Activated CD4-positive, alpha-beta memory T cell treated with anti-CD3 and anti-CD28 coated beads, Interleukin-2, amount 10 ng/mL, durations not matched to agents 7 days and 5 days (primary cell): ENCODE measurements at regions of chr1 and their contacts with region 1.

Region 1: GRCh38 chr1:112369392-112370285 is 26.4 kb upstream of the CTTNBP2NL start:
- DNase-seq: peak; percentile 85
- H3K4me3 Mint-ChIP-seq: no peak overlapping the region
- H3K27ac Mint-ChIP-seq: no peak overlapping the region
- H3K4me1 Mint-ChIP-seq: no peaks in the 10 kb centered on the region
- H3K27me3 Mint-ChIP-seq: peaks cover 54% of the 10 kb centered on the region

Region 2: DNA sequence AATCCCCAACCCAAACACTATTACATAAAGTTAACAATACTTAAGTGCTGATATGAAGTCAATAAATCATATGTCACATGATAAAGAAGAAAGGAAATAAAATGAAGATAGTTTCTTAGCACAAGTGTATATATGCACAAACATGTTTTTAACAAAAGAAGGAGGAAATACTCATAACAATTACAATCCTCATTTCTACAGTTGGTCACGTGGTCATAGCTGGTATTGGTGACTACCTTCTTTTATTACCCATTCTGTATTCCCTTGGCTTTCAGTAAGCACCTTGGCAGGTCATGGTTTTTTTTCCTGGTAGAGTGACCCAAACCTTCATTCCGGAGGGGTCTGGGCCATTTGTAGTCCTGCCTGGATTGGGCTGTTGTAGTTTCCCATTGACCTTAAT is 243.0 kb before region 1 on chr1:
- CTCF ChIA-PET with region 1: no interaction called
- POLR2A ChIA-PET with region 1: no interaction called
- DNase-seq: no peak
- H3K4me3 Mint-ChIP-seq: no peak overlapping the region
- H3K27ac Mint-ChIP-seq: no peak overlapping the region
- H3K4me1 Mint-ChIP-seq: no peaks in the 10 kb centered on the region
- H3K27me3 Mint-ChIP-seq: peaks cover 2% of the 10 kb centered on the region

Region 3: GRCh38 chr1:112298558-112298957 is 71.1 kb before region 1 on chr1:
- CTCF ChIA-PET with region 1: interaction called, 19 read pairs
- POLR2A ChIA-PET with region 1: no interaction called
- DNase-seq: peak; percentile 53
- H3K4me3 Mint-ChIP-seq: no peak overlapping the region
- H3K27ac Mint-ChIP-seq: no peak overlapping the region
- H3K4me1 Mint-ChIP-seq: no peaks in the 10 kb centered on the region
- H3K27me3 Mint-ChIP-seq: peaks cover 15% of the 10 kb centered on the region

Region 4: DNA sequence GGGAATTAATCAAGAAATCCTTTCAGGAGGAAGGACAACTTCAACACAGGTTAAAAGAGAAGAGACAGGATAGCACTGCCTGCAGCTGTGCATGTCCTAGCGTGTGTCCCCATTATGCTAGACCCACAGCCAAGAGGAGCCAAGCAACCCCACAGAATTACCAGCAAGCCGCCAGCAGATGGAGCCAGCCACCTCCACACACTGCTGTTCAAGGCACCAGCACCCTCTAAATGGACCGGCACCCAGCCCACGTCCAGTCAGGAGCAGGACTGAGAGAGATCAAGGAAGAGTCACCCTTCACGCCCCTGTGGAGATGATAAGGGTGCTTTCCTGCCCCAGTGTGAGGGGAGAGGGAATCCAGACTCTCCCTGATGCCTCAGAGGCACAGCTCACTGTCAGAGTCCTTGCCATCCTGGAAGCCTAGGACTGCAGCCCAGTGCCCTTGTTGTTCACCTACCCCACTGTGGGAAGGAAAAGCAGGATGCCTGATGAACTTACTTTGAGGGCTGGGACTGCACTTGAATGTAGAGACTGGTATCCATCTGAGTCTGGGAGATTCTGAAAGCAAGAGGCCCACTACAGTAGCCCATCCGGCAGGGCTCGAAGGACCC is 10.7 kb before region 1 on chr1:
- CTCF ChIA-PET with region 1: interaction called, 10 read pairs
- POLR2A ChIA-PET with region 1: no interaction called
- DNase-seq: peak; percentile 43
- H3K4me3 Mint-ChIP-seq: no peak overlapping the region
- H3K27ac Mint-ChIP-seq: no peak overlapping the region
- H3K4me1 Mint-ChIP-seq: peaks cover 3% of the 10 kb centered on the region
- H3K27me3 Mint-ChIP-seq: peaks cover 48% of the 10 kb centered on the region

Region 5: DNA sequence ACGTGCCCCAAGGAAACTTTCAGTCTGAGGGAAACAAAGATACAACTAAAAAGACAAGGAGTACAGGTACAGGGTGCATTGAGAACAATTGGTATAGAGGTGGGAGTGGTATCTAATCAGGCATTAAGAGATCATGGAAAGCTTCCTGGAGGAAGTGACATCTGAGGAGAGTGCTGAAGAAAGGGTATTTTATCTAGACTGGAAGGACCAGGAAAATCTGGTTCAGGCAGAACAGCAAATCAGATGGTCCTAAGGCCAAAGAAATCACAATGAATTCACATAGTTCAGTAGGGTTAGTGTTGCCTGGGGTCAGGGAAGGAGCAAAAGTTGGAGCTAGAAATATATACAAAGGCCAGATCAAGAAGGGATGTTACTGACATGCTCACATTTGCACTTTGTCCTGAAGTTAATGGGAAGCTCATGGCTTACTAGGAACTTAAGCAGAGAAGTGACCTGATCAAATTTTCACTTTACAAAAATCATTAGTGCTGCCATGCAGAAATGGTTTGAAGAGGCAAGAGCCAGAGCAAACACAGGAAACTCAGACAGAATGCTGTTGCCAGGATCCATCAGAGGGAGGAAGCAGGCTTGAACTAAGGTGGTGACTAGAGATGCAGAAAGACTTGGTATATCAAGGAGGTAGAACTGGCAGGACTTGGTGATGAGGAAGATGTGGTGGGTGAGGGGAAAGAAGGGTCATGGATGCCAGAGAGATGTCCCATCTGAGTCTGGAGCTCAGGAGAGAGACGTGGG is 11.9 kb after region 1 on chr1:
- CTCF ChIA-PET with region 1: interaction called, 12 read pairs
- POLR2A ChIA-PET with region 1: no interaction called
- DNase-seq: no peak
- H3K4me3 Mint-ChIP-seq: no peak overlapping the region
- H3K27ac Mint-ChIP-seq: no peak overlapping the region
- H3K4me1 Mint-ChIP-seq: no peaks in the 10 kb centered on the region
- H3K27me3 Mint-ChIP-seq: peaks cover 47% of the 10 kb centered on the region